Left colon (tissue), 2 donors: ENCODE measurements at regions of chr9 and their contacts with region 1.

Region 1: DNA sequence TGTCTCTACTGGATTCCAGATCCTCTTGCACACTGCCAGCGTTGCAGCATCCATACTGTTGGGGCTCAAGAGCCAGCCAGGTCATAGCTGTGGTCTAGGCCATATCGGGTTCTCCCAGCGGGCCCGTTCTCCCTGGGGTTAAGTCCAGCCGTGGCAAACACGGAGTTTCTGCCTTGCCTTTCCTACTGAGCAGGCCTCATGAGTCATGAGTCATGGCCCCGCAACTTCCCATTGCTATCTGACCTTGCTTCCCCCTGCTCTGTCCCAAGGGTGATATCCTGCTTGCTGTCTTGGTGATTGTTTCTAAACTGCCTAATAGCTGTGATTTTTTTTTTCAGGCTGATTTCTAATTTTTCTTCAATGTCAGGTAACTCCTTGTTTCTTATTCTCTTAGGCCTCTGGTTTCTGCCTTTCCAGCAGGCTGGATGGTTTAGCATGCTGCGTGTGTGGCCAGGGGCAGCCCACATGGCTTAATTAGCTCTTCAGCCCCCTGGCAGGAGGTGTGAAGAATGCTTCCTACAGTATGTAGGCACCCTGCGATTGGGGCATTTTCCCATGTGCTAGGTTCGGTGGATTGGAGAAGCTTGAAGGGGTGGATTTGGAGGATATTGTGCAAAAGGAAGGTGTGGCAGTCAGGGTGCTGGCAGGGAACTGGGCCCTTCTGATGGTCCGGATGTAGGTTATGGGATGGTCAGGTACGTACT is 18.7 kb downstream of the DAPK1 start:
- DNase-seq: peak; percentile 31 to 58
- ATAC-seq: no peak

Region 2: GRCh38 chr9:87599901-87600610 is 83.7 kb after region 1 on chr9:
- intact Hi-C with region 1: loop called in 1 of 2 experiments (anchors 10 kb)
- DNase-seq: no peak
- ATAC-seq: peak; percentile 67

Region 3: GRCh38 chr9:87850391-87850790 is 334.0 kb after region 1 on chr9:
- intact Hi-C with region 1: no loop called
- DNase-seq: no peak
- ATAC-seq: no peak